ENCODE measurements at regions of chr19 and their contacts with region 1.

Region 1: GRCh38 chr19:47186446-47187334 is 44.3 kb downstream of the BBC3 start:
- DNase-seq: peak; percentile 84
- H3K4me3 Mint-ChIP-seq: peak overlapping the region; percentile 40
- H3K27ac Mint-ChIP-seq: peak overlapping the region; percentile 98
- H3K4me1 Mint-ChIP-seq: peaks cover 86% of the 10 kb centered on the region
- H3K27me3 Mint-ChIP-seq: no peaks in the 10 kb centered on the region

Region 2: DNA sequence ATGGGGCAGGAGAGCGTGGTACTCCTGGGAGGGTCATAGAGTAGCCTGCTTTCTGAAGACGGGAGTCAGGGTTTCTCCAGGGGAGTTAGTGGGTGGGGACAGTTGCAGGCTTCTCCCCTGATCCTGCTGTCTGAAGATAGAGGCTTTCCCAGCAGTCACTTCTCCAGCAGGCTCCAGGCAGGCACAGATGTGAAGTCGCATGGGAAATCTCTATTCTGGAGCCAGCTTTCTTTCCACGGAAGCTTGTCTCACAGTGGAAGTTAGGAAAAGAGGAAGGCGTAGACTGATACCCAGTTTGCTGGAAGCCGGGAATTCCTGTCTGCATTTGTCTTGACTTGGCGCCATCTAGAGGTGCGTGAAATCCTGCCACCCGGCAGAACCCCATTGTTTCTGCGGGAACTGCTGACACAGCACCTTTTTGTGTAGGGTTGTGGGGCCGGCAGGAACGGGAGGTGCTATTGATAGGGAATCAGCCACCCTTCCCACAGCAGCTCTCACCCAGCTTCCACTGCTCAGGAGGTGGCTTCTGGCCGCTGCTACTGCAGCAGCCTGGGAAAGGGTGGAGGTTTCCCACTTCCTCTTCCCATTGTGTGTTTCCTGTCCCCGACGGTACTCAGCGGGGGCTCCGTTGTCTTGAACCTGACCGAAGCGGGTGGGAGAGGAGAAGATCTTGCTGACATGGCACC is 195.6 kb before region 1 on chr19:
- CTCF ChIA-PET with region 1: no interaction called
- DNase-seq: peak; percentile 71
- H3K4me3 Mint-ChIP-seq: no peak overlapping the region
- H3K27ac Mint-ChIP-seq: peak overlapping the region; percentile 62
- H3K4me1 Mint-ChIP-seq: peaks cover 14% of the 10 kb centered on the region
- H3K27me3 Mint-ChIP-seq: no peaks in the 10 kb centered on the region

Region 3: DNA sequence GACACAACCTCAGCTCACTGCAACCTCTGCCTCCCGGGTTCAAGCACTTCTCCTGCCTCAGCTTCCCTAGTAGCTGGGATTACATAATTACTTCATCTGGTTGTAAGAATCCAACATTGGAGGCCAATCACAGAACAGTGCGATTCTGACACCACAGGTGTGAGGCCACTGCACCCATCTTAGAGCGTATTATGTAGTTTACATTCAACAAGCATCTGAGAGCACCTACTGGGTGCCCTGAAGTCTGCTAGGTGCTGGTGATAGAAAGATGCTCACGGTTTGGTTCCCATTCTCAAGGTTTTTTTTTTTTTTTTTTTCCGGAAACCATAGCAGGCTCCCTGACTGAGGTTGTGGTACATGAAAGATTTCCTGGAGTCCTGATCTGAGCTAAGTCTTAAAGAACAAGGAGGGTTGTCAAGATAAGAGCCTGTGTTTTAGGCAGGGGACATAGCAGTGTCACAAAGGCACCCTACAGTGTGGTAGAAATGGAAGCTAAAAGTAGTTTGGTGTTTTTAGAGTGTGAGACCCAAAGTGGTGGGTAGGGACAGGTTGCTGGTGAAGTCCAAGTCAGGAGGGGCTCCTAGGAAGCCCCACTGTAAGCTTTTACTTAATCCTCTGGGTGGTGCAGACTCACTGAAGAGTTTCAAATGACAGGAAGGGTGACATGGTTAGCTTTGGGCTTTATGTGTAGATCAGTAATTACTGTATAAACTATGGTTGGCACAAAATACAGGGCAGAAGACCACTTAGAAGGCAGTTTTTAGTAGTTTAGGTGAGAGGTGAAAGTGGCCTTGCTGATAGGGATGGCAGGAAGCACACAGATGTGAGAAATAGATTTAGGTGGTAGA is 40.8 kb before region 1 on chr19:
- CTCF ChIA-PET with region 1: interaction called, 10 read pairs
- DNase-seq: peak; percentile 32
- H3K4me3 Mint-ChIP-seq: peak overlapping the region; percentile 25
- H3K27ac Mint-ChIP-seq: peak overlapping the region; percentile 92
- H3K4me1 Mint-ChIP-seq: peaks cover 66% of the 10 kb centered on the region
- H3K27me3 Mint-ChIP-seq: no peaks in the 10 kb centered on the region

Region 4: GRCh38 chr19:47157431-47158321 is 29.0 kb before region 1 on chr19:
- CTCF ChIA-PET with region 1: interaction called, 37 read pairs
- DNase-seq: peak; percentile 64
- H3K4me3 Mint-ChIP-seq: peak overlapping the region; percentile 67
- H3K27ac Mint-ChIP-seq: peak overlapping the region; percentile 97
- H3K4me1 Mint-ChIP-seq: peaks cover 69% of the 10 kb centered on the region
- H3K27me3 Mint-ChIP-seq: no peaks in the 10 kb centered on the region

Measured in activated naive CD4-positive, alpha-beta T cell treated with anti-CD3 and anti-CD28 coated beads, Interleukin-2, amount 10 ng/mL, durations not matched to agents 7 days and 5 days (primary cell).